CD4-positive, alpha-beta memory T cell (primary cell): ENCODE measurements at regions of chr22 and their contacts with region 1.

Region 1: GRCh38 chr22:41468381-41469217 is at the starts of genes ACO2 and PHF5A:
- DNase-seq: peak; percentile 98
- H3K4me3 ChIP-seq: peak within 1 kb of the TSS; percentile 67 to 90
- H3K4me3 Mint-ChIP-seq: peak within 1 kb of the TSS; percentile 86 to 95 (median 92)
- H3K27ac ChIP-seq: peak within 1 kb of the TSS; percentile 89
- H3K27ac Mint-ChIP-seq: peak within 1 kb of the TSS; percentile 96 to 100 (median 99)
- H3K4me1 ChIP-seq: peaks cover 28% of the 10 kb centered on the region
- H3K4me1 Mint-ChIP-seq: peaks cover 29 to 56% (median 44%) of the 10 kb centered on the region in 4 donors
- H3K27me3 ChIP-seq: no peaks in the 10 kb centered on the region
- H3K27me3 Mint-ChIP-seq: no peaks in the 10 kb centered on the region
- total RNA-seq, gene ACO2: 64.8 to 65.0 TPM
- total RNA-seq, gene PHF5A: 37.7 to 39.2 TPM

Region 2: DNA sequence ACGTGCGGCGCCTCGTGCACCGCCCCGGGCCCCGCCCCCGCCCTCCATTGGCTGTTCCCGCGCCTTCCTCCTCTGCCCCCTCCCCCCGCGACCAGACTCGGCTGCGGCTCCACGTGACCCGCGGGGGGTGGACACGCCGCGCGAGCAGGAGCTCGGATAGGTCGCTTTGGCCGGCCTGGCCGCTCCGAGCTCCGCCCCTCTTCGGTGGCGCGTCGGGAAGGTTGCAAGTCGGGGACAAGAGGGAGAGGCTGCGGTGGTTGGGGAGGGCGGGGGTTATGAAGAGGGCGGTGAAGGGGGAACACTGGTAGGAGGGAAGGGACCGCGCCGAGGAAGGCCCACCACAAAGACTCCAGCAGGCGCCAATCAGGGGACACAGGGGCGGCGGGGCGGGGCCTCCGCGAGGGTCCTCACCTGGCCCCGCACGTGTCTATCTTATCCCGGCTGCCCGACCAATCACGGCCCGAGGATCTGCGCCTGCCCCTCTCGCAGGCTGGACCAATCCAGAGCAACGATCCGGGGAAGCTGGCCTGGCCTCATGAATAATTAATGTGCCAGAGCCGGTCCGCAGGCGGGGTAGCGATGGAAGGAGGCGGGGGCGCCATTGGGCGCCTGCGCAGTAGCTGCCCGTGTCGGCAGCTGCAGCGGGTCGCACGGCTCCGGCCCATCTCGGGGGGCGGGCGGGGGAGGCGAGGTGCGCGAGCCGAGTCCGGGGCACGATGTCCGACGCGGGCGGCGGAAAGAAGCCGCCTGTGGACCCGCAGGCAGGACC is 87.1 kb before region 1 on chr22 and contains the start of gene TEF:
- CTCF ChIA-PET with region 1: no interaction called
- POLR2A ChIA-PET with region 1: interaction called, 40 read pairs
- intact Hi-C with region 1: loop called (anchors 1 kb)
- DNase-seq: peak; percentile 99
- H3K4me3 ChIP-seq: peak within 1 kb of the TSS; percentile 65 to 88
- H3K4me3 Mint-ChIP-seq: peak within 1 kb of the TSS; percentile 90 to 97 (median 94)
- H3K27ac ChIP-seq: peak within 1 kb of the TSS; percentile 87
- H3K27ac Mint-ChIP-seq: peak within 1 kb of the TSS; percentile 98 to 99 (median 98)
- H3K4me1 ChIP-seq: peaks cover 18% of the 10 kb centered on the region
- H3K4me1 Mint-ChIP-seq: peaks cover 12 to 36% (median 22%) of the 10 kb centered on the region in 4 donors
- H3K27me3 ChIP-seq: no peaks in the 10 kb centered on the region
- H3K27me3 Mint-ChIP-seq: no peaks in the 10 kb centered on the region
- total RNA-seq, gene TEF: 6.5 to 8.8 TPM

Region 3: DNA sequence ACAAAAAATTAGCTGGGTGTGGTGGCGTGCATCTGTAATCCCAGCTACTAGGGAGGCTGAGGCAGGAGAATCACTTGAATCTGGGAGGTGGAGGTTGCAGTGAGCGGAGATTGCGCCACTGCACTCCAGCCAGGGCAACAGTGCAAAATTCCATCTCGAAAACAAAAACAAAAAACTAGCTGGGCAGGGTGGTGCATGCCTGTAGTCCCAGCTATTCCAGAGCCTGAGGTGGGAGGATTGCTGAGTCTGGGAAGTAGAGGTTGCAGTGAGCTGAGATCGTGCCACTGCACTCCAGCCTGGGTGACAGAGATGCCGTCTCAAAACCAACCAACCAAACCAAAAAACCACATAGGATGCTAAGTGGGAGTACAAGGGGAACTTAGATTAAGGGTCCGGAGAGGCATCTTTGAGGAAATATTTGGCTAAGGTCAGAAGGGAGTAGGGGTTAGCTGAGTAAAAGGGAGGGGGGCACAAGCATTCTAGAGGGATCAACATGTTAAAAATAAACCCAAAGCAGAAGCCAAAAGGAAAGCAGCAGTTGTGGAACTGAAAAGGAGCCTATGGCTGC is 10.4 kb before region 1 on chr22:
- CTCF ChIA-PET with region 1: interaction called, 3 read pairs
- POLR2A ChIA-PET with region 1: interaction called, 261 read pairs
- intact Hi-C with region 1: no loop called
- DNase-seq: no peak
- H3K4me3 ChIP-seq: no peak overlapping the region
- H3K4me3 Mint-ChIP-seq: no peak overlapping the region
- H3K27ac ChIP-seq: no peak overlapping the region
- H3K27ac Mint-ChIP-seq: peak overlapping the region in 4 of 7 donors; percentile 10 to 58 (median 56)
- H3K4me1 ChIP-seq: no peaks in the 10 kb centered on the region
- H3K4me1 Mint-ChIP-seq: peaks cover 0 to 3% (median under 1%) of the 10 kb centered on the region in 4 donors
- H3K27me3 ChIP-seq: no peaks in the 10 kb centered on the region
- H3K27me3 Mint-ChIP-seq: no peaks in the 10 kb centered on the region